Activated B cell treated with CpG ODN at 0.5 μM for 24 hours (primary cell): ENCODE measurements at regions of chr14 and their contacts with region 1.

Region 1: DNA sequence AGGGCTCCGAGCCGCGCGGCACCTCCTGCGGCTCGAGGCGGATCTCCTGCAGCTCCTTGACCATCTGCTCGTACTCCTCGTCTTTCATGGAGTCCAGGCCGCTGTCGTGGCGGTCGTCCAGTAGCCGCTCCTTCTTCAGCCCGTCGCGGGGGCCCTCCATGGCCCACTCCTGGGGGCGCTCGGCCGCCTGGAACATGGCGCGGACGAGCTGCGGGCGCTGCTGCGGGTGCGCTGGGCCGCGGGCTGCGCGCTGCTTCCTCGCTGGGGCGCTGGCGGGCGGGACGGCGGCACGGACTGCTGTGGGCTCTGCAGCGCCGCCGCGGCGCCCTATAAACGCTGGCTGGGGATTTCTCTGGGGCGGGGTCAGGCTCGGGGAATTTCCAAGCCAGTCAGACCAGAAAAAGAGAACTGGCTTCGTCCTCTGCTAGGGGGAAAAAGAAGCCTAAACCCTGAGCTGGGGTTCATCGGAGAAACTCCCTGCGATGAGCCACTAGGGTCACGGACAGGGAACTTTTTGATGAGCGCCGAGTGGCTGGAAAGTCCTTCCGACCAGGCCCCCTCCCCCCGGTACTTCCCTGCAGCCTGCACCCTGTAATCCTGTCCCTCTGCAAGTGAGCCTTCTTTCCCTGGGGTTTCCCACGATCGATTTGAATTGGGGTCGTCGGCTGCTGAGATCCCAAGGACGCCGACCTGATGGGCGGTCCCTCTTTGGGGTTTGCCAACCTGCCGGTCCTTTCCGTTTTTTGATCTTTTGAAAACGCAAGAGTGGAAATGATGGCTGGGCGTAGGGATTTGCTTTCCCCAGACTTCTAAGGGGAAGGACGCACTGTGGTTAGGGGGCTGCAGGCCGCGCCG is at the start of gene NFKBIA:
- DNase-seq: peak; percentile 98
- ATAC-seq: peak; percentile 69
- H3K4me3 Mint-ChIP-seq: peak within 1 kb of the TSS; percentile 96
- H3K27ac Mint-ChIP-seq: peak within 1 kb of the TSS; percentile 96
- H3K4me1 Mint-ChIP-seq: peaks cover 54% of the 10 kb centered on the region
- H3K27me3 Mint-ChIP-seq: no peaks in the 10 kb centered on the region
- CTCF ChIP-seq: no peak
- total RNA-seq, gene NFKBIA: 480 and 515 TPM in 2 replicates

Region 2: DNA sequence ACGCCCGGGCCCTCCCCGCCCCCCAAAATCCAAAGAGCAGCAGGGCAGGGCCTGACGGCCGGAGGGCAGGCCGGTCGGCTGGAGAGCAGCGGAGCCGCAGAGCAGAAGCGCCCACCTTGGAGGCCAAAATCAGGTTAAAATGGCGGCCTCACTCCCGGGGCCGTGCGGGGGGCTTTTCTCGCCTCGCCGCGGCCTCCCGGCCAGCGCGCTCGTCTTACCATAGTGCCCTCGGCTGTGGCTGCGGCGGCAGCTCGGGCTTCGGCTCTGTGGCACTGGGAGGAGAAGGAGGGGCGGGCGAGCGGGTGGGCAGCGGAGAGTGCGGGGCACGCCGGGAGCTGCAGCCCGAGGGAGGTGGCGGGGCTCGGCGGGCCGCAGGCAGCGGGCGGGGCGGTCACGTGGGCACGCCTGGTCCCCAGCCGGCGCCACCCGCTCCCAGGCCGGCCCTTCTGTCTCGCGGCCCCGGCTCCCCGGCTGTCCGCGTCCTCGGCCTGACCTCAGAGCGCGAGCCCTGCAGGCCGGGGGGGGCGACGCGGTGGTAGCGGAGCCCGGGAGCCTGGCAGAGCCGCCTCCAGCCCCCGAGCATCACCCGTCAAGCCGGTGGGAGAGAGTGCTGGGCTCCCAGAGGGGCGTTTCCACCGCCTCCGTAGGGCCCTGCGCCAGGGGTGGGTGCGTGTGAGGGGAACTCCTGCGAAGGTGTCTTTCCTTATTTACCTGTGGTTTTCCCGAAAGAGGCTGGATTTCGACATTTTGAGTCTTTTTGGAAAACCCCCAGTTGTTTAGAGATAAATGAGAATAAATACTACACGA is 690.2 kb before region 1 on chr14 and contains the start of gene CFL2:
- CTCF ChIA-PET with region 1: no interaction called
- POLR2A ChIA-PET with region 1: interaction called, 11 read pairs
- intact Hi-C with region 1: no loop called
- DNase-seq: peak; percentile 80
- ATAC-seq: peak; percentile 90
- H3K4me3 Mint-ChIP-seq: peak within 1 kb of the TSS; percentile 92
- H3K27ac Mint-ChIP-seq: peak within 1 kb of the TSS; percentile 89
- H3K4me1 Mint-ChIP-seq: peaks cover 32% of the 10 kb centered on the region
- H3K27me3 Mint-ChIP-seq: no peaks in the 10 kb centered on the region
- CTCF ChIP-seq: no peak
- total RNA-seq, gene CFL2: 19.1 and 20.8 TPM in 2 replicates

Region 3: DNA sequence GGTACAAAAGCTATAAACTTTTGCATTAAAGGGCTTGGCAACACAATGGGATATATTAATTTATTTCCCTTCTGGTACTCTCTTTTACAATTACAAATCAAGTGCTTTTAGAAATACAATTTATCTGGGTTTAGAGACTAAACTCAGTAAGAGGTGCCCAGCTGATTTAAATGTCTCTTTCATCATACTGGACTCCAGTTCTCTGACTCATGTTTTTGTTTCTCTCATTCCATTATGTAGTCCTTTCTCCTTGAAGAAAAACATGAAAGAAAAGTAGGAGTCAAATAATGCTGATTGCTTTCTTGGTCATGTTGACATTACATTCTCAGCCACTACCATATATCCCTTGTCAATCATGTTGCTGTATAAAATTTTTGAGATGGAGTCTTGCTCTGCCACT is 654.0 kb before region 1 on chr14:
- CTCF ChIA-PET with region 1: no interaction called
- POLR2A ChIA-PET with region 1: no interaction called
- intact Hi-C with region 1: no loop called
- DNase-seq: no peak
- ATAC-seq: no peak
- H3K4me3 Mint-ChIP-seq: no peak overlapping the region
- H3K27ac Mint-ChIP-seq: no peak overlapping the region
- H3K4me1 Mint-ChIP-seq: no peaks in the 10 kb centered on the region
- H3K27me3 Mint-ChIP-seq: no peaks in the 10 kb centered on the region
- CTCF ChIP-seq: no peak

Region 4: GRCh38 chr14:35121887-35122695 is 282.6 kb before region 1 on chr14 and contains the starts of genes PPP2R3C and PRORP:
- CTCF ChIA-PET with region 1: interaction called, 5 read pairs
- POLR2A ChIA-PET with region 1: interaction called, 92 read pairs
- intact Hi-C with region 1: loop called (anchors 1 kb)
- DNase-seq: peak; percentile 82
- ATAC-seq: peak; percentile 88
- H3K4me3 Mint-ChIP-seq: peak within 1 kb of the TSS; percentile 99
- H3K27ac Mint-ChIP-seq: peak within 1 kb of the TSS; percentile 100
- H3K4me1 Mint-ChIP-seq: peaks cover 49% of the 10 kb centered on the region
- H3K27me3 Mint-ChIP-seq: no peaks in the 10 kb centered on the region
- CTCF ChIP-seq: no peak
- total RNA-seq, gene PPP2R3C: 46.0 and 48.9 TPM in 2 replicates
- total RNA-seq, gene PRORP: 22.8 and 25.6 TPM in 2 replicates

Region 5: DNA sequence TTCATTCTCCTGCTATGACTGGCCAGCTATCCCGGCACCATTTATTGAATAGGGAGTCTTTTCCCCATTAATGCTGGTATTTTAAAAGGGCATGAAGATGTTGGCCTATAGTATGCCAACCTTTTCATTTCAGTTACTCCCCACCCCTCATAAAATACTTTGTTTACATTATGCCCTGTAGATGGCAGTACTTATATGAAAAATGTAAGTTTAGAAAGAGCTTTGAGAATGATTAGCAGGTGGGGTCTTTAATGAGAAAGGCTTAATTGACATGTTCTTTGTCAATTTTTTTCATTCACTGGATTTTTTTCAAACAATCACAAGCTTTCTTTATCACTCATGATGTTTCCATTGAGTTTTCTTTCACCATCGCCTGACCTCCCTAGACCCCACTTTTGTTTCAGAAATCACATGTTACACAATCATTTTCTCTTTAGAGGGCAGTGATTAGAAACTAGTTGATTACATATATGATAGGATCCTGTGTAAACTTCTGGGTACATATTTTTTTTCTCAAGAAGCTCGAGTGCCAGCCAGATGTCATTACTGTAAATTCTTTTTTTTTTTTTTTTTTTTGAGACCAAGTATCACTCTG is 175.1 kb before region 1 on chr14:
- CTCF ChIA-PET with region 1: interaction called, 47 read pairs
- POLR2A ChIA-PET with region 1: interaction called, 46 read pairs
- intact Hi-C with region 1: loop called (anchors 1 kb)
- DNase-seq: no peak
- ATAC-seq: peak; percentile 65
- H3K4me3 Mint-ChIP-seq: no peak overlapping the region
- H3K27ac Mint-ChIP-seq: no peak overlapping the region
- H3K4me1 Mint-ChIP-seq: peaks cover 5% of the 10 kb centered on the region
- H3K27me3 Mint-ChIP-seq: no peaks in the 10 kb centered on the region
- CTCF ChIP-seq: no peak

Region 6: GRCh38 chr14:35301735-35302528 is 102.7 kb before region 1 on chr14:
- CTCF ChIA-PET with region 1: interaction called, 3 read pairs
- POLR2A ChIA-PET with region 1: interaction called, 14 read pairs
- intact Hi-C with region 1: no loop called
- DNase-seq: no peak
- ATAC-seq: no peak
- H3K4me3 Mint-ChIP-seq: no peak overlapping the region
- H3K27ac Mint-ChIP-seq: no peak overlapping the region
- H3K4me1 Mint-ChIP-seq: peaks cover 41% of the 10 kb centered on the region
- H3K27me3 Mint-ChIP-seq: no peaks in the 10 kb centered on the region
- CTCF ChIP-seq: no peak

Region 7: DNA sequence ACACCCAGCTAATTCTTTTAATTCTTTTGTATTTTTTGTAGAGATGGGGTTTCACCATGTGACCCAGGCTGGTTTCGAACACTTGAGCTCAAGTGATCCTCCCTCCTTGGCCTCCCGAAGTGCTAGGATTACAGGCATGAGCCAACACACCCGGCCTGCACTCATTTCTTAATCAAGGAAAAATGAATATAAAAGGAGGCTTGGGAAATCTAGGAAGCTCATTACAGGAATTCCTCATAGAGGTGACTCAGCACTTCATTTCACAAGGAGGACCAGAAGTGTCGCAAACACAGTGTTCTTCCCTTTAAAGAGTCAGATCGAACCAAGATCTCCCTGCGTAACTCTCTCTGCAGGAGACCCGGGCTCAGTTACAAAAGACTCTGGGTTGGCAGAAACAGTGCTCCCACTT is 30.4 kb before region 1 on chr14:
- CTCF ChIA-PET with region 1: no interaction called
- POLR2A ChIA-PET with region 1: interaction called, 191 read pairs
- intact Hi-C with region 1: no loop called
- DNase-seq: no peak
- ATAC-seq: no peak
- H3K4me3 Mint-ChIP-seq: no peak overlapping the region
- H3K27ac Mint-ChIP-seq: no peak overlapping the region
- H3K4me1 Mint-ChIP-seq: peaks cover 5% of the 10 kb centered on the region
- H3K27me3 Mint-ChIP-seq: no peaks in the 10 kb centered on the region
- CTCF ChIP-seq: no peak

Region 8: GRCh38 chr14:35456261-35456660 is 51.6 kb after region 1 on chr14:
- CTCF ChIA-PET with region 1: no interaction called
- POLR2A ChIA-PET with region 1: no interaction called
- intact Hi-C with region 1: no loop called
- DNase-seq: no peak
- ATAC-seq: no peak
- H3K4me3 Mint-ChIP-seq: no peak overlapping the region
- H3K27ac Mint-ChIP-seq: no peak overlapping the region
- H3K4me1 Mint-ChIP-seq: no peaks in the 10 kb centered on the region
- H3K27me3 Mint-ChIP-seq: peaks cover 11% of the 10 kb centered on the region
- CTCF ChIP-seq: no peak

Region 9: DNA sequence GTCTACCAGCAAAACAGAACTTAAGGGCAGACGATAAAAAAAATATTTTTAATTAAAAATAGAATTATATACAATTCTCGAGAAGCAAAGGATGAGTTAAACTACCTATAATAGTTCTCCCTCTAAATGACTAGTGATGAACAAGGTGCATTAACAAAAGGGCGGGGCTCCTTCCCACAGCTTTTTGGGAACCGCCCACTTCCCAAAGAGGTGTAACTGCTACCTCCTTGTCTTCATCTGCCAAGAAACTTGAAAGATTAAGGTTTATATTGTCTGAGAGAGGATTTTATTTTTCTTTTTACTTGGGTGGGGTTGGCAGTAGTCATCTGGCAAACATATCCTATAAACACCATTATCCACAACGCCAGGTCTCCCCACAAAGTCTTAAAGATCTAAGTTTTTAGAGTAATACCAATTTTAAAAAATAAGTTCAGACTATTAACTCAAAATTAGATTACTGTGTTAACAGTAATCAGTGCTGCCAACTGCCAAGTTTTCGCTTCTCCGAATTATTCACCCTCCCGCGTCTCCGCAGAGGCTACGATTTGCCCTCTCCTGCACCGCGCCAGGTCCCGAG is 403.5 kb after region 1 on chr14:
- CTCF ChIA-PET with region 1: no interaction called
- POLR2A ChIA-PET with region 1: interaction called, 5 read pairs
- intact Hi-C with region 1: loop called (anchors 1 kb)
- DNase-seq: no peak
- ATAC-seq: no peak
- H3K4me3 Mint-ChIP-seq: peak overlapping the region; percentile 95
- H3K27ac Mint-ChIP-seq: peak overlapping the region; percentile 87
- H3K4me1 Mint-ChIP-seq: peaks cover 31% of the 10 kb centered on the region
- H3K27me3 Mint-ChIP-seq: no peaks in the 10 kb centered on the region
- CTCF ChIP-seq: no peak